ENCODE measurements at regions of chr17 and their contacts with region 1.

Region 1: GRCh38 chr17:39754161-39754951 is 16.6 kb downstream of the GRB7 start:
- DNase-seq: peak; percentile 97 to 98
- ATAC-seq: peak; percentile 72 to 93 (median 79)
- H3K4me3 ChIP-seq: peak overlapping the region; percentile 47
- H3K4me3 Mint-ChIP-seq: peak overlapping the region; percentile 83
- H3K27ac ChIP-seq: peak overlapping the region; percentile 96
- H3K27ac Mint-ChIP-seq: peak overlapping the region; percentile 94 to 99
- H3K4me1 ChIP-seq: peaks cover 70% of the 10 kb centered on the region
- H3K4me1 Mint-ChIP-seq: peaks cover 57 to 58% of the 10 kb centered on the region in 2 donors
- H3K27me3 ChIP-seq: no peaks in the 10 kb centered on the region
- H3K27me3 Mint-ChIP-seq: no peaks in the 10 kb centered on the region
- CTCF ChIP-seq: peak; percentile 87

Region 2: DNA sequence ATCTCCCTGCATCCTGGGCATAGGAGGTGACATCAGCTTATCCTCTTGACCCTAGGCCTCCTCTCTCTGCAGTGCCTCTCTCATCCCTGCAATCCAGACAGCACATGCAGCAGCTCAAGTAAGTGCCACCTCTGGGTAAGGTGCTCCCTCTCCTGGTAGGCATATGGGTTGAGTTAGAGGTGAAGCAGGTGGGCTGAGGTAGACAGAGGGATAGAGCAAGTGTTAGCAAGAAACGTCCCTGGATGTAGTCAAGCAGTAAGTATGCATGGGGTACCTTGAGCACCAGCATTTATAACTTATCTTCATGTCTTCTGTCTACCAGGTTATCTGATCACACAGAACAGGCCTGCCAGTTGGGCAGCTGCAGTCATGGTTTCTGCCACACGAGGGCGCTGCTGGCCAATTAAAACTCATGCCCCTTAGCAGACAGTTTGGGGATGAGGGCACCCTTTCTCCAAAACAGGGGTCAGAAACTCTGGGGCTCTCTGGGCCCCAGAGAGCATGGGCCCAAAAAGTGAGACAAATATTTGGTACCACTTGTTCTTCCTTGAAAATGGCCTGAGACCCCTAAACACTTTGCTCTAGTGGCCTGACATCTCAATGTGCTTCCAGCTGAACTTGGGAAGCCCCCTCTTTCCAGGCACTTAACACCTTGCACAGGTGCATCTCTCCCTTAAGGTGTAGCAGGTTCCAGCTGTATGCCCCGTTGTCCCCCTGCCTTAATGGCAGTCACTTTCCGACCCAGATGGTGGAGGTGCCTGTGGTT is 206.5 kb before region 1 on chr17:
- intact Hi-C with region 1: loop called (anchors 5 kb)
- DNase-seq: peak; percentile 75 to 82
- ATAC-seq: peak; percentile 70 to 88 (median 85)
- H3K4me3 ChIP-seq: no peak overlapping the region
- H3K4me3 Mint-ChIP-seq: no peak overlapping the region
- H3K27ac ChIP-seq: no peak overlapping the region
- H3K27ac Mint-ChIP-seq: no peak overlapping the region
- H3K4me1 ChIP-seq: no peaks in the 10 kb centered on the region
- H3K4me1 Mint-ChIP-seq: no peaks in the 10 kb centered on the region
- H3K27me3 ChIP-seq: no peaks in the 10 kb centered on the region
- H3K27me3 Mint-ChIP-seq: no peaks in the 10 kb centered on the region
- CTCF ChIP-seq: peak; percentile 96

Region 3: DNA sequence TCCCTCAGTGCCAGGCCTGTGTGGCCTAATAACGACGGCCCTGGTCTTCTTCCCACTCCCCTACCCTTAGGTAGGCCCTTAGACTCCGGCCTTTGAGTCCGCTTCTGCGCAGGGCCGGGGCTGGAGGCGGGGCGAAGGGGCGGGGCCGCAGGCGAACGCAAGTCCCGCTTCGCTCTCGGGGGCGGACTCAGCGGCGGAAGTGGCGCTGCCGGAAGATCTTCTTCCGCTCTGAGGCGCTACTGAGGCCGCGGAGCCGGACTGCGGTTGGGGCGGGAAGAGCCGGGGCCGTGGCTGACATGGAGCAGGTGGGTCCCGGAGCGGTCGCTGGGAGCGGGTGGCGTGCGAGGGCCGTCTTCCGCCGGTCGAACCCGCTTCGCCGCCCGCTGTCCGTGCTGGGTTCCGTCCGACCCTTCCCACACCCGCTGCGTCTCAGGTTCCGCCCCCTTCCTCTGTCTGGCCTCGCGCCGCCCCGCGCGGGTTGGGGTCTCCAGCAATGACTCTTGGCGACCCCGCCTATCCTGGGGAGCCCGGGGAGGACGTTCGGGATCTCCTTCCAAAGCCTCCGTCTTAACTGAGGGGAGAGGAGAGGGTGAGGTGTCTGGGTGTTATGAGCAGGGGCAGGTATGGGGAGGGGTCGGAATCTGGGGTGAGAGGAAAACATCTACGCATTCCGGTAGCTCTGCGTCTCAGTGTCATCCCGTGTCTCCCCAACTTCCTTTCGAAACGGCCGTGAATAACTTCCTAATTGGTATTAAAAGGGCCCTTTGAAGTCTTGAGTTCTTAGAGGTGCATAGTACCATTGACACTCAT is 117.2 kb before region 1 on chr17 and contains the start of gene STARD3:
- intact Hi-C with region 1: loop called (anchors 5 kb)
- DNase-seq: peak; percentile 87 to 95
- ATAC-seq: peak; percentile 91 to 95 (median 92)
- H3K4me3 ChIP-seq: peak within 1 kb of the TSS; percentile 86
- H3K4me3 Mint-ChIP-seq: peak within 1 kb of the TSS; percentile 95
- H3K27ac ChIP-seq: peak within 1 kb of the TSS; percentile 97
- H3K27ac Mint-ChIP-seq: peak within 1 kb of the TSS; percentile 86 to 92
- H3K4me1 ChIP-seq: peaks cover 60% of the 10 kb centered on the region
- H3K4me1 Mint-ChIP-seq: peaks cover 48 to 61% of the 10 kb centered on the region in 2 donors
- H3K27me3 ChIP-seq: no peaks in the 10 kb centered on the region
- H3K27me3 Mint-ChIP-seq: no peaks in the 10 kb centered on the region
- CTCF ChIP-seq: no peak
- total RNA-seq, gene STARD3: 97.1 to 115 (median 105) TPM

Region 4: DNA sequence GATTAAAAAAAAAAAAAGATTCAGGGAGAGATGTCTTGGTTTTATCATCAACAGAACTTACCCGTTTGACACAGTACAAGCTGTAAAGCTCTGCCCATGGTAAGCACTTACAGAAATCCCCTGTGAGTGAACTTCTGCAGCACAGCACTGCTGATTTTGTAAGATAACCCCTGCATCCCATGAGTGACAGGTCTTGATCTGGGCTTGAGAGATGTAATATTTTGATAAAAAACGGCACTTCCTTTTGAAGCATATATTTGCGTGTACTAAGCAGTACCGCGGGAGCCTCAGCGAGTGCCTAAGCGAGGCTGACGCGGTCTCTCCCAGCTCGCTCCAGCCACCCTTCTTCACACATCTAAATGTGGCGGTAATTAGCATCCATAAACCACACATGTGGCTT is 59.3 kb after region 1 on chr17:
- intact Hi-C with region 1: loop called (anchors 1 kb)
- DNase-seq: peak; percentile 52 to 94
- ATAC-seq: peak; percentile 89 to 96 (median 95)
- H3K4me3 ChIP-seq: no peak overlapping the region
- H3K4me3 Mint-ChIP-seq: peak overlapping the region; percentile 86
- H3K27ac ChIP-seq: peak overlapping the region; percentile 71
- H3K27ac Mint-ChIP-seq: peak overlapping the region; percentile 91 to 95
- H3K4me1 ChIP-seq: peaks cover 25% of the 10 kb centered on the region
- H3K4me1 Mint-ChIP-seq: peaks cover 58 to 60% of the 10 kb centered on the region in 2 donors
- H3K27me3 ChIP-seq: no peaks in the 10 kb centered on the region
- H3K27me3 Mint-ChIP-seq: no peaks in the 10 kb centered on the region
- CTCF ChIP-seq: no peak

Region 5: DNA sequence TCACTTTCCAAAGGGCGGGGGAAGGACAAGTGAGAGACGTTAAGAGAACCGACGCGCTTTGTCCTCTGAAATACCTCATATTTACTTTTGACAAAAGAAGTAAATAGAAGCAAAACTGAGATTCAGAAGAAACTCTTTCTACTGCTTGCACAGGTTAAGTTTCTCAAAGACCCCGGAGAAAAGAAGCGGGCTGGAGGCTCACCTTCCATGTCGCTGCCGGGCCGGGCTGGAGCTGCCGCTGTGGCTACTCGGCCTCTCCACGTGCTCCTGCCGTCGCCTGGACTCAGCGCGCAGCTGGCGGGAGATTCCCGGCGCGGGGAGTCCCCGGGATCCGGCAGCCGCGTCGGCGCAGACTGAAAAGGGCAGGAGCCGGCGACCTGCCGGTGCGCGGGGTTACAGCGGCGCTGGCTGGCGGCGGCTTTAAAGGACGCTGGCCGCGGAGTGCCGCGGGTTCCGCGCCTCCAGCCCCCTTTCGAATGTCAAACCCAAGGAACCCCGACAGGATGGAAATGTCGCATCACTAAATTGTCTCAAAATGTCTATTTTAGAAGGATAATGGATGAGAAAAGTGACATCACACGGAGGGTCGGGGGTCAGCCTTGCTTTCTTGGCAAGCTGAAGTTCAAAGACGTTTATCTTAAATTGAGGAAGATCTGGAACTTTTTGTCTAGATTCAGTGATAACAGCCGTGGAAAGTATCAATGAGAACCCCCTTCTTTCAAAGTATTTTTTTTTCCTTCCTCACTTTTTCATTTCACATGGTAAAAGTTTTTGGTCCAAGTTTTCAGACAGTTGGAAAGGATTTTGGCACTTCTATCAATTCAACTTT is 109.8 kb after region 1 on chr17 and contains the start of gene IKZF3:
- intact Hi-C with region 1: loop called (anchors 1 kb)
- DNase-seq: peak; percentile 81 to 95
- ATAC-seq: peak; percentile 89 to 94 (median 92)
- H3K4me3 ChIP-seq: peak within 1 kb of the TSS; percentile 95
- H3K4me3 Mint-ChIP-seq: peak within 1 kb of the TSS; percentile 98
- H3K27ac ChIP-seq: peak within 1 kb of the TSS; percentile 97
- H3K27ac Mint-ChIP-seq: peak within 1 kb of the TSS; percentile 91 to 99
- H3K4me1 ChIP-seq: peaks cover 24% of the 10 kb centered on the region
- H3K4me1 Mint-ChIP-seq: peaks cover 52 to 57% of the 10 kb centered on the region in 2 donors
- H3K27me3 ChIP-seq: peaks cover 3% of the 10 kb centered on the region
- H3K27me3 Mint-ChIP-seq: peaks cover 0 to 4% of the 10 kb centered on the region in 2 donors
- CTCF ChIP-seq: peak; percentile 49
- total RNA-seq, gene IKZF3: 134 to 162 (median 139) TPM

Region 6: DNA sequence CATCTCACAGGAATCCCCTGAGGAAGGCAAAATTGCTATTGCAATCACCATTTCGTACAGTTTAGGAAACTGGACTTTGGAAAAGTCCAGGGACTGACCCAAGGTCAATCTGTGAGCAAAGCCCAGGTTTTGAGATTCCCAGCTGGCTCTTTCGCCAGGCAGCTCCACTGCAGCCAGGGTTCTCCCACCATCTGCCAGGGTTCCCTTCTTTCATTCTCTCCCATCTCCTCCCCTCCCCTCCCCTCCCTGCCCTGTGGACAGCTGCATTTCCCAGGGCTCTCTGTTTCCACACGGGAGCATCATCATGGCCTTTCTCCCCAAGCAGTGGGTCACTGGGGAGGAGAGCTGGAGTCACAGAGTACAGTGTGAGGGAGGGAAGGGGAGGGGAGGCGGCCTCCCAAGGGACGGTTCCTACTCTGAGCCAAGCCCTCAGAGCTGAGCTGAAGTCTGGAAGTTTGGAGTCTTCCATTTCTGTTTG is 196.6 kb after region 1 on chr17:
- intact Hi-C with region 1: no loop called
- DNase-seq: no peak
- ATAC-seq: no peak
- H3K4me3 ChIP-seq: no peak overlapping the region
- H3K4me3 Mint-ChIP-seq: no peak overlapping the region
- H3K27ac ChIP-seq: no peak overlapping the region
- H3K27ac Mint-ChIP-seq: no peak overlapping the region
- H3K4me1 ChIP-seq: peaks cover 18% of the 10 kb centered on the region
- H3K4me1 Mint-ChIP-seq: peaks cover 0 to 5% of the 10 kb centered on the region in 2 donors
- H3K27me3 ChIP-seq: no peaks in the 10 kb centered on the region
- H3K27me3 Mint-ChIP-seq: no peaks in the 10 kb centered on the region
- CTCF ChIP-seq: no peak

Region 7: DNA sequence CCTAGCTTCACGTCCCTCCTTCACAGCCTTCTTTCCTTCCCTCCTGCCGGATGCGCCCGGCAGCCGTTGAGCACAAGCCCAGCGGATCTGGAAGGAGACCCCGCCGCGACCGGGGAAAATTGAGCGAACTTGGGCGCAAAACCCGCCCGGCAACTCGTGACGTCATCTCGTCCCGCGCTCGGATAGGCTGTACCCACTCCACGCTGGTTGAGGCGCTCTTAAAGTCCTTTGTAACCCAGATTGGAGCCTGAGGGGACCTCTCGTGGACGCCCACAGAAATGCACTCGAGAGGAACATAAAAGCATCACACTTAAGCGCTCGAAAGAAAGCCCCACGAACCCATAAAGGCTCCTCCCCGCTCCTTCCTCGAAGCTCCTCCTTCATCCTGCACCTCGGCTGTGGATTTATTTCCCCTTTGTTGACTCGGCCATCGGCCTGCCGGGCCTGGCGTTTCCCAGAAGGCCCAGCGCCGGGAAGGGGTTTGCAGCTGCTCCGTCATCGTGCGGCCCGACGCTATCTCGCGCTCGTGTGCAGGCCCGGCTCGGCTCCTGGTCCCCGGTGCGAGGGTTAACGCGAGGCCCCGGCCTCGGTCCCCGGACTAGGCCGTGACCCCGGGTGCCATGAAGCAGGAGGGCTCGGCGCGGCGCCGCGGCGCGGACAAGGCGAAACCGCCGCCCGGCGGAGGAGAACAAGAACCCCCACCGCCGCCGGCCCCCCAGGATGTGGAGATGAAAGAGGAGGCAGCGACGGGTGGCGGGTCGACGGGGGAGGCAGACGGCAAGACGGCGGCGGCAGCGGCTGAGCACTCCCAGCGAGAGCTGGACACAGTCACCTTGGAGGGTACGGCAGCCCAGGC is 226.2 kb after region 1 on chr17 and contains the start of gene PSMD3:
- intact Hi-C with region 1: loop called (anchors 1 kb)
- DNase-seq: peak; percentile 97 to 100
- ATAC-seq: peak; percentile 89 to 97 (median 91)
- H3K4me3 ChIP-seq: peak within 1 kb of the TSS; percentile 70
- H3K4me3 Mint-ChIP-seq: peak within 1 kb of the TSS; percentile 98
- H3K27ac ChIP-seq: peak within 1 kb of the TSS; percentile 91
- H3K27ac Mint-ChIP-seq: peak within 1 kb of the TSS; percentile 99
- H3K4me1 ChIP-seq: peaks cover 18% of the 10 kb centered on the region
- H3K4me1 Mint-ChIP-seq: peaks cover 27 to 29% of the 10 kb centered on the region in 2 donors
- H3K27me3 ChIP-seq: no peaks in the 10 kb centered on the region
- H3K27me3 Mint-ChIP-seq: no peaks in the 10 kb centered on the region
- CTCF ChIP-seq: peak; percentile 71
- total RNA-seq, gene PSMD3: 66.1 to 83.8 (median 78.9) TPM